ENCODE measurements at regions of chr7 and their contacts with region 1.

Region 1: GRCh38 chr7:81469869-81470723 is 299.8 kb downstream of the HGF start:
- DNase-seq: peak; percentile 67 to 74
- ATAC-seq: peak; percentile 47 to 85 (median 66)
- H3K4me3 ChIP-seq: no peak overlapping the region
- H3K27ac ChIP-seq: no peak overlapping the region
- H3K4me1 ChIP-seq: no peaks in the 10 kb centered on the region
- H3K27me3 ChIP-seq: no peaks in the 10 kb centered on the region
- CTCF ChIP-seq: peak; percentile 64

Region 2: DNA sequence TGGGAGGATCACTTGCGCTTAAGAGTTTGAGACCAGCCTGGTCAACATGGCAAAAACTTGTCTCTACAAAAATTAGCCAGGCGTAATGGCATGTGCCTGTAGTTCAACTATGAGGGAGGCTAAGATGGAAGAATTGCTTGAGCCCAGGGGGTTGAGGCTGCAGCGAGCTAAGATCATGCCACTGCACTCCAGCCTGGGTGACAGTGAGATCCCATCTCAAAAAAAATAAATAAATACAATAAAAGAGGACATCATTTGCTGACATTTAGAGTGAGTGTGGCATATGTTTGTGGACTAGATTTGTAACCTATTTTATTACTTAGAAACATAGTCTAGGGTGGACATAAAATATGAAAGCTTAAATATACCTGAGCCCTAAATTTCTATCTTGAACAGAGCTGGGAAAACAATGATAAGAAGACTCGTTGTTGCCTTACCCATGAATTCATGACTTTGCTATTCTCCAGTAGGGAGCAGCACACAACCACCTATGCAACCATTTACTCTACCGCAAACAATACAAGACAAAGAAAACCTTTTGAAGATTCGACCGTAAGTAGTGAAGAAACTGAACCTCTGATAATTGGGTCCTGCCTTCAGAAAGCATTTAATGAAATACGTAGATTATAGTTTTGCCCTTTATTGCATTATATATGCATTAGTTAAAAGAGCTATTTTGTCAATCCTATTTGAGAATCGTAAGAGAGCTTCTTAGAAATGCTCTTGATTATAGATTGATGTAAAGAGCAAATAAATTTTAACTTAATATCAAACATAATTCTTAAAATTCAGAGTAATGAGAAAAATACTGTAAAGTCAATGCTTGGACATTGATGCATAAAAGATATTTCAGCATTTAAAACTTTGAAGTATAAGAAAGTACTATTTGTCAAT is 1041.7 kb before region 1 on chr7:
- intact Hi-C with region 1: loop called in 1 of 2 experiments (anchors 10 kb)
- DNase-seq: no peak
- ATAC-seq: peak; percentile 79 to 99 (median 86)
- H3K4me3 ChIP-seq: peak overlapping the region; percentile 32
- H3K27ac ChIP-seq: no peak overlapping the region
- H3K4me1 ChIP-seq: no peaks in the 10 kb centered on the region
- H3K27me3 ChIP-seq: no peaks in the 10 kb centered on the region
- CTCF ChIP-seq: peak; percentile 79

Region 3: GRCh38 chr7:80542421-80542820 is 927.7 kb before region 1 on chr7:
- intact Hi-C with region 1: loop called in 1 of 2 experiments (anchors 10 kb)
- DNase-seq: no peak
- ATAC-seq: no peak
- H3K4me3 ChIP-seq: no peak overlapping the region
- H3K27ac ChIP-seq: no peak overlapping the region
- H3K4me1 ChIP-seq: no peaks in the 10 kb centered on the region
- H3K27me3 ChIP-seq: no peaks in the 10 kb centered on the region
- CTCF ChIP-seq: no peak

Region 4: DNA sequence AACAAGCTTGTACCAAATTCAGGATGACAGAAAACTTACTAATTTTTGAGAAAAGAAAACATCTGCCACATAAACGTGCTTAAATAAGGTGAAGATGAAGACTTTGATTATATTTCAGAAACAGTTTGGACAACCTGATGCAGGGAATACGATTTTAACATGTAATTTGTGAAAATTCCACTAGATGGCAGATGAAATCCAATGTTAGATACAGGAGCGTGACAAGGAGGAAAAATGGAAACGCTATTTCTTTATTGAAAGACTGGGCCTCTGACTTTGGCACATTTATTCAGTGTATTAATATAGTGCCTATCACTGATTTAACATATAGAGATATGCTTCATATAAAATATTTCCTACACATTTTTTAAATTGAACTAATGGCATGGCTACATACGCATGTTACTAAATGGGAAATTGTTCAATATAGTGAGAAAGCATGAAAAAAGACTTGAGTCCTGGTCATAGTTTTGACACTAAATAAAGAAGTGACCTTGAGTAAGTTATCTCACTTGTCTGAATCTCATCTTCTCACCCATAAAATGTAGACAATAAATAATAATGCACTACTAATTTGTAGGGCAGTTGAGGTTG is 771.0 kb before region 1 on chr7:
- intact Hi-C with region 1: loop called (anchors 2 to 5 kb)
- DNase-seq: no peak
- ATAC-seq: peak in 3 of 4 donors; percentile 51 to 84 (median 73)
- H3K4me3 ChIP-seq: no peak overlapping the region
- H3K27ac ChIP-seq: no peak overlapping the region
- H3K4me1 ChIP-seq: no peaks in the 10 kb centered on the region
- H3K27me3 ChIP-seq: no peaks in the 10 kb centered on the region
- CTCF ChIP-seq: peak; percentile 77